Activated CD4-positive, alpha-beta memory T cell treated with anti-CD3 and anti-CD28 coated beads for 36 hours (primary cell): ENCODE measurements at regions of chr6 and their contacts with region 1.

Region 1: DNA sequence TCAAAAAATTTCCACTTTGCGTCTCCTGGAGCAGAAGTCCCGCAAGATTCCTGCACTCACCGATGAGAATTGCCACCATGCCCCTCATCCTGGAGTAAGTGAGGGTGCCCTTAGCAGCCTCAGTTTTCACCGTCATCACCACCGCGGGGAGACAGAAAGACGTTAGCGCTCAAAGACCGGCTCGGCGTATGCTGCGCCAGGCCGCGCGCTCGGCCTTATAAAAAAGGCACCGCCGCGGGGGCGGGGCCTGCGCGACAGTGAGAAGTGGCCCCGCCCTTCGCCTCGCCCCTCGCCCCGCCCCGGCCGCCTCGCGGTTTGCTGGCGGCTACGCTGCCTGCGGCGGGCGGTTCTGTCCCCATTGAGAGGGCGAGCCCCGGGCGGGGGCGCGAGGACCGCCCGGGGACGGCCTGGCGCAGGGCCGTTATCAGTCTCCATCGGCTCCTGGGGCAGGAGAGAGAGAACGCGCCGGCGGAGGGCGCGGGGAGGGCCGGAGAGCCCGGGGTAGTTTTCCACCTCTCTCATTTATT is 122.3 kb upstream of the SLC2A12 start:
- DNase-seq: peak; percentile 94
- H3K4me3 Mint-ChIP-seq: peak overlapping the region; percentile 98
- H3K27ac Mint-ChIP-seq: peak overlapping the region; percentile 94
- H3K4me1 Mint-ChIP-seq: peaks cover 62% of the 10 kb centered on the region
- H3K27me3 Mint-ChIP-seq: no peaks in the 10 kb centered on the region

Region 2: GRCh38 chr6:134216301-134217010 is 41.7 kb after region 1 on chr6:
- CTCF ChIA-PET with region 1: no interaction called
- POLR2A ChIA-PET with region 1: no interaction called
- intact Hi-C with region 1: no loop called
- DNase-seq: no peak
- H3K4me3 Mint-ChIP-seq: no peak overlapping the region
- H3K27ac Mint-ChIP-seq: no peak overlapping the region
- H3K4me1 Mint-ChIP-seq: no peaks in the 10 kb centered on the region
- H3K27me3 Mint-ChIP-seq: no peaks in the 10 kb centered on the region

Region 3: GRCh38 chr6:134247231-134247833 is 72.6 kb after region 1 on chr6:
- CTCF ChIA-PET with region 1: interaction called, 3 read pairs
- POLR2A ChIA-PET with region 1: interaction called, 3 read pairs
- intact Hi-C with region 1: loop called (anchors 1 kb)
- DNase-seq: peak; percentile 86
- H3K4me3 Mint-ChIP-seq: peak overlapping the region; percentile 20
- H3K27ac Mint-ChIP-seq: peak overlapping the region; percentile 86
- H3K4me1 Mint-ChIP-seq: peaks cover 51% of the 10 kb centered on the region
- H3K27me3 Mint-ChIP-seq: no peaks in the 10 kb centered on the region

Region 4: DNA sequence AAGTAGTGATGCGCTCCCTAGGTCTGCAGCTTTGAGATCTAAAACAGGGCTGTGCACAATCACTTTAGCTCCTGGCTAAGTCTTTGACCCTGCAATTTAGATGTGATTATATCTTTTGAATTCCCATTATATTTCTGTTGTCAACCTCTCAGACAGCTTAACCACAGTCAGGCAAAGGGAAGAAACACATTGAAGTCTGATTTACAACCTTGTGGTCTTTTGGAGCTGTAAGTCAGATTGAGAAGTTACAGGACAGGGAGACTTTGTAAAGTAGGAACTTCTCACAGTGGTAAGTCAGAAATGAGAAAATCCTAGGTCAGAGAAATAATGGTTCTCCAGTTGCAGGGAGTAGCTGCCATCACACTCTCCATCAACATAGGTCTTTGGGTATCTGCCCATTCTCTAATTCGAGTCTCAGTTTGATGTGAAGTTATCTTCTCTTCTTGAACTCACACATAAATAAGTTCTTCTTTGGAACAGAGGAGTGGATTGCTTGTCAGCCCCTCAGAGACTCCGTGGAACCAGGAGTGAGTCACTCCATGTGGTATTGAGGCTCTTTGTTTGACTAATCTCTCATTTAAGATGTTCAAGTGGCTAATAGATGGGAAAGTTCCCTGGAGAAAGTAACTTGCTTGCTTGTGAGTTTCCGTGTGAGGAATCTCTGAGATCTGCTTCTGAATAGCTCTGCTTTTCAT is 178.2 kb after region 1 on chr6:
- CTCF ChIA-PET with region 1: interaction called, 7 read pairs
- POLR2A ChIA-PET with region 1: interaction called, 4 read pairs
- intact Hi-C with region 1: loop called (anchors 2 kb)
- DNase-seq: peak; percentile 51
- H3K4me3 Mint-ChIP-seq: no peak overlapping the region
- H3K27ac Mint-ChIP-seq: no peak overlapping the region
- H3K4me1 Mint-ChIP-seq: peaks cover 28% of the 10 kb centered on the region
- H3K27me3 Mint-ChIP-seq: no peaks in the 10 kb centered on the region

Region 5: DNA sequence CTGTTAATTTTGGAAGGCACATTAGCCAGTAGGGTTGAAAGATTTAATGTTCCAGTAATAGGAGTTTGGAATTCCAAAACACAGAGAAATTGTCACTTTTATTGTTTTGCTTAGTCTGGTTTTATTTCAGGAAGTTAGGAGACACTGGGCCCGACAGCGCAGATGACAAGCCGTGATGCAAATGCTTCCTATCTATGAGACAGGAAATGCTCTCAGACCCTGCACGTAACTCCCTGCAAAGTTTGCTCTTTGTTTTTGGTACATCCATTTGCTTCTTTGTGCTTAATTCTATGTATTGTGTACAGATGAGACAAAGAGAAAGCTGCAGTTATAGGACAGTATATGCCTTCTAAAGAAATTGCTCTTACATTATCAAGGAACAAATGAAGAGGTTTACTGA is 344.7 kb after region 1 on chr6:
- CTCF ChIA-PET with region 1: interaction called, 3 read pairs
- POLR2A ChIA-PET with region 1: interaction called, 3 read pairs
- intact Hi-C with region 1: loop called (anchors 5 kb)
- DNase-seq: peak; percentile 58
- H3K4me3 Mint-ChIP-seq: no peak overlapping the region
- H3K27ac Mint-ChIP-seq: peak overlapping the region; percentile 64
- H3K4me1 Mint-ChIP-seq: peaks cover 28% of the 10 kb centered on the region
- H3K27me3 Mint-ChIP-seq: no peaks in the 10 kb centered on the region

Region 6: DNA sequence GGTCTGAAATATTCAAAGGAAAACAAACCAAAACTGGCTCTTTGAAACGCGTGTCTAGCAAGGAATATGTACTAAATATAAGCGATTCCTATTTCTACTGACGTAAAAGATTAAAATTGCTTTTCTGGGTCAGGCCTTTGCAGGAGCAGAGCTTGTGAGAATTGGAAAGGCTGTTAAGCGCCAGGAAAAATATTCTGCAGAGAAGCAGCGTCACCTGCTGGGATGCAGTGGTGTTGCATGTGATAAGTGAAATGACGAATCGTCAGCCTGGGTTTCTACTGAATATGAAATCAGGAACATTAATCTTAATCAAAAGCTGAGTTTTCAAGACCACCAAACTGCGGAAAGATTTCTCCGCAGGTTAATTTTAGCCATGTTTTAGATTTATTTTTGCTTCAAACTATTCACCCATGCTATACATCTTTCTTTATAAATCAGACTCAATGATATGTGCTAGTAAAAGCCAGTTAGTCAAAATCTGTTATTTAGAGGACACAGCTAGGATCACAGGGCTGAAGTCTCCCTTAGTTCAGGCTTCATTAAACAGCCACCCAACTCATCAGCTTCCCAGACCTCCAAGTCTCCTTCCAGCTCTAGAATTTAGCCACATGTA is 707.8 kb after region 1 on chr6:
- CTCF ChIA-PET with region 1: interaction called, 8 read pairs
- POLR2A ChIA-PET with region 1: no interaction called
- intact Hi-C with region 1: loop called (anchors 1 kb)
- DNase-seq: peak; percentile 74
- H3K4me3 Mint-ChIP-seq: no peak overlapping the region
- H3K27ac Mint-ChIP-seq: no peak overlapping the region
- H3K4me1 Mint-ChIP-seq: no peaks in the 10 kb centered on the region
- H3K27me3 Mint-ChIP-seq: peaks cover 18% of the 10 kb centered on the region